ENCODE measurements at regions of chr1 and their contacts with region 1.

Region 1: DNA sequence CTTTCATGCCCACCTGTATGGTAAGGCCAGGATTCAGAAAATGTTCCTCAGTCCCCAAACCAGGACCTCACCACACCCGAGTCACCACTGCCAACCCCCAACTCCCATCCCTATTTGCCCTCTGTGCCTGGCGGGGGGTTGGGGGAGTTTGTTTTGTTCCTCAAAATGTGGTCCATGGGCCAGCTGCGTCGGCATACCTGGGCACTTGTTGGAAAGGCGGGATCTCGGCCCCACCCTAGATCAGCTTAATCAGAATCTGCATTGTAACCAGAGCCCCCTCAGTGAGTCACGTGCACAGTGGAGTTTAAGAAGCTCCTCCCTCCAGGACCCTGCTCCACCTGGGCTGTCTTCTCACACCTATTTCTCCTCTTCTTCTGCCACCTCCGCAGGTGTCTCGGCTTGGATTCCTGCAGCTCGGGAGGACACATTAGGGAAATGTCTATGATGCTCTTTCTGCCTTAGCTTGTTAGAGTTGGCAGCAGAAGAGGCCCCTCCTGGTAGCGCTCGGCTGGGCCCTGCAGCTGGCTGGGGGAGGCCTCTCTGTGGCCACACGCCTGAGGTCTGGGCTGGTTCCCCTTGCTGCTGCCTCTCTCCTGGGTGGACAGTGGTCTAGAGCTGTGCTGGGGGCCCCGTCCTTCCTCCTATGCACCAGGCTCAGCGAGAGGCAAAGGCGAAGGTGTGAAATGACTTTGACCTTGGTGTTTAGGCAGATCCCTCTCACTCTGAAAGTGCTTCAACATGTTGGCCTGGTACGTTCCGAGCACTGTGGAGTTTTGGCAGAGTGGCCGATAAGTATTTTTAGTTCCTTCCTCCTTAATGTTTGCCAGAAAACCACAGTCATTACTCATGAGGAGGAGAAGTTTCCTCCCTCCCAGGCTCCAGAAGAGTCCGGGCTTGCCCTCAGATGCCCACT is 41.8 kb upstream of the CAMTA1 start:
- DNase-seq: peak; percentile 60
- H3K4me3 ChIP-seq: no peak overlapping the region
- H3K27me3 ChIP-seq: no peaks in the 10 kb centered on the region
- CTCF ChIP-seq: no peak

Region 2: GRCh38 chr1:6727535-6727934 is 15.9 kb before region 1 on chr1:
- CTCF ChIA-PET with region 1: interaction called, 19 read pairs
- POLR2A ChIA-PET with region 1: no interaction called
- DNase-seq: no peak
- H3K4me3 ChIP-seq: no peak overlapping the region
- H3K27me3 ChIP-seq: no peaks in the 10 kb centered on the region
- CTCF ChIP-seq: peak; percentile 87

Region 3: DNA sequence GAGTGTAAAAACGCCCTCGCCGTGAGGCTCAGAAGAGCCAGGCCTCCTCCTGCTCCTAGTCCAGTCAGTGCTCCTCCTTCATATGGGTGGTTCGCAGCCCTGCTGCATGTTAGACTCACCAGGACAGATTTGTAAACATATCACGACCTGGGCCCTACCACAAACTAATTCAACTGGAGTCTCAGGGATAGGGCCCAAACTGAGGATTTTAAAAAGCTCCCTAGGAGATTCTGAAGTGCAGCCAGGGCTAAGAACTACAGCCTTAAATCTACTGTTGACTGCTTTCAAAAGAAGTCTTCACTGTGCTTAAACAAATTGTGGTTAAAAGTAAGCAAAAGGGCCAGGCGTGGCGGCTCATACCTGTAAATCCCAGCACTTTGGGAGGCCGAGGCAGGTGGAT is 98.9 kb after region 1 on chr1:
- CTCF ChIA-PET with region 1: no interaction called
- POLR2A ChIA-PET with region 1: no interaction called
- DNase-seq: no peak
- H3K4me3 ChIP-seq: no peak overlapping the region
- H3K27me3 ChIP-seq: no peaks in the 10 kb centered on the region
- CTCF ChIP-seq: no peak